HepG2 (cell line): ENCODE measurements at regions of chr13 and their contacts with region 1.

Region 1: GRCh38 chr13:94416454-94417080 is 62.9 kb downstream of the DCT start:
- DNase-seq: peak; percentile 67
- ATAC-seq: peak; percentile 98
- H3K4me3 ChIP-seq: no peak overlapping the region
- H3K27ac ChIP-seq: no peak overlapping the region
- H3K4me1 ChIP-seq: peaks cover 8% of the 10 kb centered on the region
- H3K27me3 ChIP-seq: no peaks in the 10 kb centered on the region; a peak in 1 of 5 replicates
- CTCF ChIP-seq: peak; percentile 87
- EP300 ChIP-seq: no peak
- POLR2A ChIP-seq: no peak
- RAD21 ChIP-seq: peak; percentile 62

Region 2: GRCh38 chr13:92896842-92897241 is 1519.7 kb before region 1 on chr13:
- CTCF ChIA-PET with region 1: no interaction called
- POLR2A ChIA-PET with region 1: no interaction called
- in situ Hi-C with region 1: no loop called
- intact Hi-C with region 1: loop called (anchors 2 kb)
- DNase-seq: peak; percentile 37
- ATAC-seq: peak; percentile 66
- H3K4me3 ChIP-seq: no peak overlapping the region
- H3K27ac ChIP-seq: no peak overlapping the region
- H3K4me1 ChIP-seq: no peaks in the 10 kb centered on the region
- H3K27me3 ChIP-seq: no peaks in the 10 kb centered on the region
- CTCF ChIP-seq: peak; percentile 58
- EP300 ChIP-seq: no peak
- POLR2A ChIP-seq: no peak
- RAD21 ChIP-seq: no peak

Region 3: GRCh38 chr13:93462151-93462550 is 954.4 kb before region 1 on chr13:
- CTCF ChIA-PET with region 1: no interaction called
- POLR2A ChIA-PET with region 1: no interaction called
- in situ Hi-C with region 1: no loop called
- intact Hi-C with region 1: no loop called
- DNase-seq: no peak
- ATAC-seq: no peak
- H3K4me3 ChIP-seq: no peak overlapping the region
- H3K27ac ChIP-seq: no peak overlapping the region
- H3K4me1 ChIP-seq: no peaks in the 10 kb centered on the region
- H3K27me3 ChIP-seq: no peaks in the 10 kb centered on the region
- CTCF ChIP-seq: no peak
- EP300 ChIP-seq: no peak
- POLR2A ChIP-seq: no peak
- RAD21 ChIP-seq: no peak

Region 4: DNA sequence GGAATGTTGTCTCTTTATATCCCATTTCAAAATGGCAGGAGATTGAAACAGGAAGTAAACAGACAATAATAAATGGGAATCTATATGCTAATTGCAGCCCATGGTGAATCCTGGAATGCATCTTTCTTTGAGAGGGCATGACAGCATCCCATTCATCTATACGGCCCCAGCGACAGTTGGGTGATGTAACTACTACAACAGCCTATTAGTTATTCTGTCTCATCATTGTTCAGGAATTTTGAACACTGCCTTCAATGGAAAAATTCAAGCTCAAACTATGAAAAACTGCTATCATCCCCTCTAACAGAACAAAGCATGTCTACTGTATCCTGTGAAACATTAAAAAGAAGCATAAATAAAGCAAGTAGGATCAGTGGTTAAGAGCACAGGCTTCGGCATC is 199.2 kb before region 1 on chr13:
- CTCF ChIA-PET with region 1: no interaction called
- POLR2A ChIA-PET with region 1: no interaction called
- in situ Hi-C with region 1: no loop called
- intact Hi-C with region 1: no loop called
- DNase-seq: no peak
- ATAC-seq: no peak
- H3K4me3 ChIP-seq: no peak overlapping the region
- H3K27ac ChIP-seq: no peak overlapping the region
- H3K4me1 ChIP-seq: no peaks in the 10 kb centered on the region
- H3K27me3 ChIP-seq: no peaks in the 10 kb centered on the region
- CTCF ChIP-seq: no peak
- EP300 ChIP-seq: no peak
- POLR2A ChIP-seq: no peak
- RAD21 ChIP-seq: no peak

Region 5: DNA sequence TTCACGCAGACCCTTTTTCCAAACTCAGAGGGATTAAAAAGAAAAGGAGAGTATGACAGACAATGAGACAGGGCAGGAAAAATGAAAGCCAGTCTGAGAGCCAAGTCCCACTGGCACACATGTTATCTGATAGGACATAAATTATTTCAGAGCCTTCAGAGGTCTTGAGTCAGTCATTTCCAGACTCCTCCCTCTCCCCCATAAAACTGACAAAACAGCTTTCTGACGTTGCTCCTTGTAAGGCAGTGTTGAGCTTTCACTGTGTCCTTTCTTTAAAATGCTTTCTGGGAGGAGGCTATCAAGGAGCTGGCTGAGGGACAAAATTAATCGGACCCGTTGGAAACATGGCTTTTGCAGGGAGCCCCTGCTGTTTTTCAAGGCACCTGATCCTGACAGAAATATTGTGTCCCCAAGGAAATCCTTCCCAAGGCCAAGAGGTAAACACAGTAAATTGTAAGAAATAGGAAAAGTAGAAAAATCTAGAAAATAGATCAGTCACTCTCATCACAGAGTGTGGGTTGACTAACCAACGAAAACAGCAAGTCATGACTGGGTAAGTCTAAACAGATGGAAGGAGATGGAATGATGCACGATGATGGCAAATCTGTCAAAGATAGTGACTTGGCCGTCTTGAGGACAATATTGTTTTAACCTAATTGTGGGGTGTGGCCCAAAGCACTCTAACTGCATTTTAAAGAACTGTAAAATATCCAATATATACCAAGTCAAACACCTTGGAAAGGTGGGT is 26.8 kb before region 1 on chr13:
- CTCF ChIA-PET with region 1: no interaction called
- POLR2A ChIA-PET with region 1: no interaction called
- in situ Hi-C with region 1: no loop called
- intact Hi-C with region 1: no loop called
- DNase-seq: no peak
- ATAC-seq: no peak
- H3K4me3 ChIP-seq: no peak overlapping the region
- H3K27ac ChIP-seq: no peak overlapping the region
- H3K4me1 ChIP-seq: no peaks in the 10 kb centered on the region
- H3K27me3 ChIP-seq: no peaks in the 10 kb centered on the region; a peak in 1 of 5 replicates
- CTCF ChIP-seq: no peak
- EP300 ChIP-seq: no peak
- POLR2A ChIP-seq: no peak
- RAD21 ChIP-seq: no peak

Region 6: GRCh38 chr13:94400874-94401273 is 15.7 kb before region 1 on chr13:
- CTCF ChIA-PET with region 1: no interaction called
- POLR2A ChIA-PET with region 1: no interaction called
- in situ Hi-C with region 1: no loop called
- intact Hi-C with region 1: no loop called
- DNase-seq: peak; percentile 29
- ATAC-seq: peak; percentile 52; the same call in 2 of the 3 replicates
- H3K4me3 ChIP-seq: no peak overlapping the region
- H3K27ac ChIP-seq: no peak overlapping the region
- H3K4me1 ChIP-seq: no peaks in the 10 kb centered on the region
- H3K27me3 ChIP-seq: no peaks in the 10 kb centered on the region
- CTCF ChIP-seq: no peak
- EP300 ChIP-seq: no peak; a peak in 1 of 4 replicates
- POLR2A ChIP-seq: no peak
- RAD21 ChIP-seq: no peak